Motor neuron (in vitro differentiated cells): ENCODE measurements at regions of chr16 and their contacts with region 1.

Region 1: DNA sequence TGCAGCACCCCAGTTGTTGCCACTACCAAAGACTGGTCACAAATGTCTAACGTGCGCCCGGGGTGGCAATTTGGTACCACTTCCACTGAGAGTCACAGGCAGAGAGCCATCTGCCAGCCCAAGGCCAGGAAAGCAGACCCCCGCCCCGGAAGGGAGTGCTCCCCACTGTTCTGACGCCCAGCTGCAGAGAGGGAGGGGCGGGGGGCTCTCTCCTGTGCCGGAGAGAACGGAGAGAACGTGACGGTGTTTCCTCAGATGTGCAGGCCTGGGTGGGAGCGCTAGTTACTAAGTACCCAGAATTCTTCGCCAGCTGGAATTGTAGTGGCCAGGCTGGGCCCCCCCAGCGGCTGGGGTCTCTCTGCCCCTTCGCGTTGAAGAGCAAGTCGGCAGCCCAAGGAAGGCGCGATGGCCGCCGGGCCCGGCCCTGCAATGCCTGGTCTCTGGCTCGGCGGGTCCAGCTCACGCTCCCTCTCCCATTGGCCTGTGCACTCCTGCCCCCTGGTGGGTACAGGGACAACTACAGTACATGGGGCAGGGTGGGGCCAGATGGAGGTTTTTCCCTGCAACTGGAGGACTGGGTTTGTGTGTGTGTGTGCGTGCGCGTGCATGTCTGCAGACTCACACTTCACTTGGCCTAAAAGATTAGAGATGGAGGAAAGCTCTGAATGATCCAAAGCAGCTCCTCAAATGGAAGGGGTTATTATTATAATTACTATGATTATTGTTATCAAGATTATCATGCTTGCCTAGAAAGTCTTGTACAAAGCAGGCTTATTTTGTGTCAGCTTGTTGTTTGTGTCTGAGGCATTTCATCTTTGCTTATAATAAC is 107.1 kb downstream of the AMFR start:
- ATAC-seq: peak; percentile 99 to 100 (median 99)
- H3K4me3 ChIP-seq: no peak overlapping the region
- H3K27ac ChIP-seq: no peak overlapping the region
- H3K4me1 ChIP-seq: peaks cover 2 to 13% of the 10 kb centered on the region in 2 donors

Region 2: DNA sequence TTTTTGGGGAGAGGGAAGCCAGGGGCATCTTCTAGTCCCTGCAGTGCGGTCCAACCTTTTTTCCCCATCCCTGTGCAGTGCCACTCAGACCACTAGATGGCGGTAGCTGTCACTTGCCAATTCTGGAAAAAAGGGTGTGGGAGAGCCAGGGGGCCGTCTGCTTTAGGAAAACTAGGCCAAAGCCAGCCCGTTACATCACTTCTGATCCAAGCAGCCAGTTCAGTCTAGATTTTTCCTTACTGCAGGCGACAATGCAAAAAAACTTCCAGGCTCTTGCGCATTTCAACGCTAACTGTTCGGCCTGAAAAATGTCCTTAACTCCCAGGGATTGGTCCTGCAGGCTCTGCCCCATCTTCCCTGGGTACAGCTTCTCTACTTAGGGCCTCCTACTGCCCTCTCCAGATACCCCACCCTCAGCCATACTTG is 373.8 kb before region 1 on chr16:
- in situ Hi-C with region 1: loop called in 8 of 9 experiments (anchors 10 to 25 kb)
- ATAC-seq: peak; percentile 93 to 99 (median 98)
- H3K4me3 ChIP-seq: no peak overlapping the region
- H3K27ac ChIP-seq: peak overlapping the region in 1 of 2 donors; percentile 13
- H3K4me1 ChIP-seq: peaks cover 0 to 3% of the 10 kb centered on the region in 2 donors

Region 3: GRCh38 chr16:56041686-56042085 is 276.5 kb before region 1 on chr16:
- in situ Hi-C with region 1: loop called in 3 of 9 experiments (anchors 25 kb)
- ATAC-seq: peak; percentile 59 to 97 (median 84)
- H3K4me3 ChIP-seq: no peak overlapping the region
- H3K27ac ChIP-seq: no peak overlapping the region
- H3K4me1 ChIP-seq: no peaks in the 10 kb centered on the region